CD4-positive, alpha-beta T cell (primary cell): ENCODE measurements at regions of chr15 and their contacts with region 1.

Region 1: DNA sequence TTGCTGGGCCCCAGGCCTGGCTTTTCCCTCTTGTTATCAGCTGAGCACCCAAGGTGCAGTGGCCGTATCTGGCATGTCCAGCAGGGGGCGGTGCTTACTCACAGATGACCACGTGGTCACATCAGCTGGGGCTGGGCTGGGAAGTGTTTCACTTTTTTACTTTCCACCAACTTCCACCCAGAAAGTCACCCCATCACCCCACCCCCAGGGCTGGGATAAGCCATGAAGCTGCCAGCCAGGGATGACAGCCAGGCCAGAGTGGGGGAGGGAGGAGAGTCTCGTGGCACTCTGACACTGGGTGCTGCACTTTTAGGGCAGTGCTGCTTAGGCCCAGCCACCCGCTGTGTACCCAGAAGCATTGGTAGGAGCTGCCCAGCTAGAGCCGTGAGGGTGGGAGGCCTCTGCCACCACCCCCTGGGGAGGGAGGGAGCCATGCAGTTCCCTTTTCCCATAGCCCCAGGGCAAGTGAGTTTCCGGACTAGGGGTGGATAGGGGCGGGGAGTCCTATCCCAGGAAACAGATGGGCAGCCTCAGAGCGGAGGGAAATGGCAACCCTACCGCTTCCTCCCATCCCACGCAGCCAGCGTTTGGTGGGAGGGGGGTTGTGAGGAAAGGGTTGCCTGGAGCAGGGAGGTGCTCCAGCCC is 6.1 kb downstream of the PPCDC start:
- DNase-seq: peak; percentile 79 to 94 (median 86)
- ATAC-seq: peak; percentile 97
- H3K4me3 ChIP-seq: no peak overlapping the region
- H3K4me3 Mint-ChIP-seq: peak overlapping the region; percentile 49
- H3K27ac ChIP-seq: no peak overlapping the region
- H3K27ac Mint-ChIP-seq: peak overlapping the region; percentile 31
- H3K4me1 ChIP-seq: peaks cover 24% of the 10 kb centered on the region
- H3K4me1 Mint-ChIP-seq: peaks cover 17% of the 10 kb centered on the region
- H3K27me3 ChIP-seq: no peaks in the 10 kb centered on the region
- H3K27me3 Mint-ChIP-seq: no peaks in the 10 kb centered on the region
- CTCF ChIP-seq: peak; percentile 93

Region 2: GRCh38 chr15:74873036-74873755 is 156.3 kb before region 1 on chr15 and contains the start of gene SCAMP2:
- CTCF ChIA-PET with region 1: no interaction called
- POLR2A ChIA-PET with region 1: no interaction called
- intact Hi-C with region 1: no loop called
- DNase-seq: peak; percentile 79 to 95 (median 86)
- ATAC-seq: peak; percentile 90
- H3K4me3 ChIP-seq: peak within 1 kb of the TSS; percentile 65
- H3K4me3 Mint-ChIP-seq: peak within 1 kb of the TSS; percentile 94
- H3K27ac ChIP-seq: peak within 1 kb of the TSS; percentile 93 to 94
- H3K27ac Mint-ChIP-seq: peak within 1 kb of the TSS; percentile 90
- H3K4me1 ChIP-seq: peaks cover 50% of the 10 kb centered on the region
- H3K4me1 Mint-ChIP-seq: peaks cover 45% of the 10 kb centered on the region
- H3K27me3 ChIP-seq: no peaks in the 10 kb centered on the region
- H3K27me3 Mint-ChIP-seq: no peaks in the 10 kb centered on the region
- CTCF ChIP-seq: no peak
- total RNA-seq, gene SCAMP2: 56.1 to 56.9 TPM

Region 3: DNA sequence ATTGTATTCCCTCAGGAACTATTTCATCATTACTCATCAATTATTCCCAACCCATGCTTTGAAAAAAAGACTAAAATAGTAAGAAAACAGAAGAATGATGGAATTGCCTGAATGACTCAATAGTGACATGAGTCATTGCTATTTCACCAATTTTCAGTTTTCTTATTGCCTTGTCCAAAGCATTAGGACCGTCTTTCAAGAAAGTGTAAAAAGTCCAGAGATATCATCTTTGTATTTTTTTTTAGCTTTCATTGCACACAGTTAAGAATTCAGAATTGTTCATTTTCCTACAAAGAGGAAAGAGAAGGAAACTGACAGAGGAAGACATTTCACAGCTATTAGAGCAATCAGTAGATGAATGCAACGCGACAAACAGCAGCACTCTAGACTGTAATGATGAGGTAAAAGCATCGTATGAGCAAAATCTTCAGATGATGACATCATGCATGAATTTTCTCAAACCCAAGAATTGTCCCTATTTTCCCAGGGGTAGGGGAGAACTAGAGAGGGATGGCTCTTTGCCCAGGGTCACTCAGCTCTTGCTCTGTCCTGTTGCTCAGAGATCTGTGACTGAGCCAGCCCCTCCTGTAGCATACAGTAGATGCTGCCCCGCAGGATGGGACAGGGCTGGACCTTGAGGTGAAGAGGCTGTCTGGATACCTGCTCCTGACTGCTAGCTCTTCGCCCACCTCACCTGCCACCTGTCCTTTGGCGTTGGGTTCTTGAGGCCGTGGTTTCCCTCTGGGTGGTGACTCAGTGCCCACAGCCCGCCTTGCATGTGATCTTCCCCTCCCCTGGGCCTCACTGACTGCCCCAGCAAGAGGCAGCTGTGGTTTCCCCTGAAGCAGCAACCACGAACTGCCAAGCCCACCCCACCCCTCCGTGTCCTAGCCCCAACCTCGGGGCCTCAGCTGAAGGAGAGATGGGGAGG is 78.7 kb after region 1 on chr15:
- CTCF ChIA-PET with region 1: no interaction called
- POLR2A ChIA-PET with region 1: no interaction called
- intact Hi-C with region 1: no loop called
- DNase-seq: peak in 13 of 14 experiments; percentile 7 to 81 (median 26)
- ATAC-seq: peak; percentile 67
- H3K4me3 ChIP-seq: no peak overlapping the region
- H3K4me3 Mint-ChIP-seq: no peak overlapping the region
- H3K27ac ChIP-seq: peak overlapping the region in 1 of 2 donors; percentile 15
- H3K27ac Mint-ChIP-seq: peak overlapping the region; percentile 44
- H3K4me1 ChIP-seq: peaks cover 41% of the 10 kb centered on the region
- H3K4me1 Mint-ChIP-seq: peaks cover 11% of the 10 kb centered on the region
- H3K27me3 ChIP-seq: peaks cover 5 to 7% of the 10 kb centered on the region in 2 experiments
- H3K27me3 Mint-ChIP-seq: peaks cover 19% of the 10 kb centered on the region
- CTCF ChIP-seq: no peak

Region 4: GRCh38 chr15:75208501-75209288 is 179.2 kb after region 1 on chr15:
- CTCF ChIA-PET with region 1: interaction called, 41 read pairs
- POLR2A ChIA-PET with region 1: interaction called, 15 read pairs
- intact Hi-C with region 1: loop called (anchors 1 kb)
- DNase-seq: no peak
- ATAC-seq: no peak
- H3K4me3 ChIP-seq: no peak overlapping the region
- H3K4me3 Mint-ChIP-seq: no peak overlapping the region
- H3K27ac ChIP-seq: no peak overlapping the region
- H3K27ac Mint-ChIP-seq: no peak overlapping the region
- H3K4me1 ChIP-seq: peaks cover 40% of the 10 kb centered on the region
- H3K4me1 Mint-ChIP-seq: peaks cover 33% of the 10 kb centered on the region
- H3K27me3 ChIP-seq: no peaks in the 10 kb centered on the region
- H3K27me3 Mint-ChIP-seq: no peaks in the 10 kb centered on the region
- CTCF ChIP-seq: no peak

Region 5: DNA sequence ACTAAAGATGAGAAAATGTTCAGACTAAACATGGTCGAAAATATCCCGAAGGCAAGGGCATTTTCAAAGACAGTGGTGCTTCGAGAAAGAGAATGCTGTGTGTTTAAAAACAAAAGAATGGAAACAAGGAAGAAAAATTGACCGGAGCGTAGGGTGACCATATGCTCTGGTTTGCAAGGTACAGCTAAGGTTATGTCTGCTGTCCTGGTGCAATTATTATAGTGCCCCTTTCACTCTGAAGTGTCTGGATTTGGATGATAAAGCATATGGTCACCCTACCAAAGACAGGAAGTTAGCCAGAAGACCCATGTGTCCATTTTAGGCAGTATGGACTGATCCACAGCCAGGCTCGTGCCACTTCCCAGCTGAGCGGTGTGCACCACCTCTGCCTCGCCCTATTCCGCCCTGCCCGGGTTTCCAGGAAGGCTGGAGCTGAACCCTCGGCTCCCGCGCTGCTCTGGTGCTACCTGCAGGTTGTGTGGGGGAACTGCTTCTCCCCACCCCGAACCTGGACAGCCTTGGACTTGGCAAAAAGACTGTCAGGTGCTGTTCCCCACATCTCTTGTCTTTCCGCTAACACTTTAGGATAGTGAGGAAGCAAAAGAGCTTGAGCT is 278.4 kb after region 1 on chr15:
- CTCF ChIA-PET with region 1: no interaction called
- POLR2A ChIA-PET with region 1: no interaction called
- intact Hi-C with region 1: loop called in 1 of 2 experiments (anchors 5 kb)
- DNase-seq: peak in 4 of 14 experiments; percentile 2 to 17 (median 10)
- ATAC-seq: peak; percentile 49
- H3K4me3 ChIP-seq: no peak overlapping the region
- H3K4me3 Mint-ChIP-seq: no peak overlapping the region
- H3K27ac ChIP-seq: no peak overlapping the region
- H3K27ac Mint-ChIP-seq: no peak overlapping the region
- H3K4me1 ChIP-seq: no peaks in the 10 kb centered on the region
- H3K4me1 Mint-ChIP-seq: no peaks in the 10 kb centered on the region
- H3K27me3 ChIP-seq: peaks cover 0 to 9% of the 10 kb centered on the region in 2 experiments
- H3K27me3 Mint-ChIP-seq: peaks cover 43% of the 10 kb centered on the region
- CTCF ChIP-seq: no peak